Mucosa of descending colon (tissue), 3 donors: ENCODE measurements at regions of chr10 and their contacts with region 1.

Region 1: GRCh38 chr10:57338823-57339558 is 928.7 kb downstream of the IPMK start:
- DNase-seq: peak in 1 of 3 donors; percentile 44
- ATAC-seq: no peak
- H3K4me3 ChIP-seq: no peak overlapping the region
- H3K4me1 ChIP-seq: no peaks in the 10 kb centered on the region
- CTCF ChIP-seq: peak; percentile 45

Region 2: GRCh38 chr10:57874810-57875209 is 535.8 kb after region 1 on chr10:
- intact Hi-C with region 1: no loop called
- DNase-seq: no peak
- ATAC-seq: no peak
- H3K4me3 ChIP-seq: no peak overlapping the region
- H3K4me1 ChIP-seq: no peaks in the 10 kb centered on the region
- CTCF ChIP-seq: no peak

Region 3: DNA sequence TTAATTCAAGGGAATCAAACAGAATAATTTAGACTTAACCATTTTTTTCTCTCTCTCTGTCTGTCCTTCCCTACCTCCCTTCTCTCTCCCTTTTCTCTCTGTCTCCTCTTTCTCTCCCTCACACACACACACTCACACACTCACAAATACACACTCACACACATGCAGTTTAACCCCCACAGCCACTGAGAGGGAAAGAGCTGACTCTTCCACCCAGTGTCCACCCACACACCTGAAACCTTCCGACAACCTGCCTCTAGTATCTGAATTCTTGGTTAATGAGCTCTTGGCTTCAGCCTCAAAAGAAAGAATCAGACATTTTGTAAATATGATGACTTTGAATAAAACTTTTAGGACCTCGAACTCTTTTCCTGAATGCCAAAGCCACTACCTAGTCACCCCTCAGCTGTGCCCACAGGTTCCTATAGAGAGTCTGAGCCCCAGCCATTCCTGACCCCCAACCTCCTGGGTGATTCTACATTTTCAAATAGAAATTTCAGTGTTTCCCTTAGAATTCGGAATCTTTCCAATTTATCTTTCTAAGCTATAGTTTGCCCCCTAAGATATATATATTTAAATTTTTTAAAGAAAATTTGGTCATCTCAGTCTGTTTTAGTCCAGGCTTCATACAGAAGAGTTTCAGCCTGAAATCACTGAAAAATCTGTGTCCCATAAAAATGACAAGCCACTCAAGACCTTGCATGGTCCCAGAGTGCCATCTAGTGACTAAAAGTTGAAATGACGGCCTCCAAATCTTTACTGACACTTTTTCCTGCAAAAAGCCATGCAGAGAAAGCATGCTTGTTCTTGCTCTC is 725.9 kb after region 1 on chr10:
- intact Hi-C with region 1: loop called in 1 of 2 experiments (anchors 10 kb)
- DNase-seq: peak in 1 of 3 donors; percentile 60
- ATAC-seq: peak; percentile 59
- H3K4me3 ChIP-seq: no peak overlapping the region
- H3K4me1 ChIP-seq: no peaks in the 10 kb centered on the region
- CTCF ChIP-seq: peak; percentile 59